Uterus (tissue), 4 donors: ENCODE measurements at regions of chr9 and their contacts with region 1.

Region 1: DNA sequence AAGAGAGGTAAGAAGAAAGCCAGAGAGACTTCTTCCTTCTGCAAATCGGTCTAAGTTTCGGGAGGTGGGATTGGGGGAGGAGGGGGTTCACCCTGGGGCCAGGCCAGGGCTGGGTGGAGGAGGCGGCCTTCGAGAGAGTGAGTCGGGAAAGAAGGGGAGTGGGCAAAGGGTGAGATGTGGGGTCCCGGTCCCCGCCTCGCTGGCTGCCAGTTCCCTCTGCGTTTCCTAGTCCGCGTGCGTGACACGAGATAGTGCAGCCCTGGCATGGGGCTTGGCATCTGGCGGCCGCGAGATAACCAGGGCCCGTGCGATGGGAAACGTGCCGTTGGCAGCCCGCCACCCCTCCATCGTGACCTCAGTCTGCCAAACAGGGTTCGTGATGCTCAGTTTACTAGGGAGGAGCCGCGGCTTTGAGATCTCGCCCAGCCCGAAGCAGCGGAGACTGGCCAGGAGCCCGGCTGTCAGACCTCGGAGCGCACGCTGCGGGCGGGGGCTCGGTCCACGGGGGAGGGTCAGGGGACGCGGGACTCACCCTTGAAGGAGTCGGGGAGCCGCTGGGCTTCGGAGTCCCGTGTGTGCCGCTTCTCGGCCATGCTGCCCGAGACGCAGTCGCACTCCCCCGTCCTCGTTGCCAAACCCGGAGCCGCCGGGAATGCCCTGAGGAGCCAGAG is at the start of gene STOM:
- DNase-seq: peak; percentile 90 to 91
- H3K4me3 ChIP-seq: peak within 1 kb of the TSS; percentile 68 to 74
- H3K27ac ChIP-seq: peak within 1 kb of the TSS; percentile 97 to 98
- H3K4me1 ChIP-seq: peaks cover 3 to 5% of the 10 kb centered on the region in 2 donors
- H3K27me3 ChIP-seq: no peaks in the 10 kb centered on the region
- CTCF ChIP-seq: no peak
- POLR2A ChIP-seq: peak; percentile 98 to 99
- total RNA-seq, gene STOM: 143 to 299 (median 158) TPM

Region 2: GRCh38 chr9:121326130-121326838 is 43.4 kb before region 1 on chr9:
- intact Hi-C with region 1: loop called (anchors 10 kb)
- DNase-seq: peak; percentile 92 to 93
- H3K4me3 ChIP-seq: no peak overlapping the region
- H3K27ac ChIP-seq: peak overlapping the region; percentile 82 to 98
- H3K4me1 ChIP-seq: peaks cover 3 to 15% of the 10 kb centered on the region in 2 donors
- H3K27me3 ChIP-seq: no peaks in the 10 kb centered on the region
- CTCF ChIP-seq: no peak
- POLR2A ChIP-seq: peak in 1 of 2 donors; percentile 48

Region 3: DNA sequence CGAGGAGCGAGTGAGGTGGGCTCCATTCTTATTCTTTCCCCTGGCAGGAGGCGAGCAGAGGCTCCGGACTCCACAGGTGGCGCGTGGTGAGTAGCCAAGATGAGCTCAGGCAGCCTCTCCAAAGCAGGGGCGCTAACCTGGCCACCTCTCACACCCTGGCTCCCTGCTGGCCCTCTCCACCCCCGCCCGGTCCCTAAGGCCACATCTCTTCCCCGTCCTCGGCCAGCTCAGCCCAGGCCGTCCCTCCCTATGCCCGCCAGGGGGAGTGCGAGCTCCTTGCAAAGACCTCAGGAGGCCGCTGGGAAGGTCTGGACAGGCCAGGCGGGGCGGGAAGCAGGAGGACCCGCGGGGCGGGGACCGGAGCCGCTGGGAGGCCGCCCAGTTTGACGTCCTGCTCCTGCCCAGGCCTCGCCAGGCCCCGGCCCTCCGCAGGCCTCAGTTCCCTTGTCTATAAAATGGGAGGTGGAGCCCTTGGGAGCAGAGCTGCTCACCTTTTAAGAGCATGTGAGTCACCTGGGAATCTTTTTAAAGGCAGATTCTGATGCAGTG is 176.2 kb after region 1 on chr9:
- intact Hi-C with region 1: no loop called
- DNase-seq: peak; percentile 95 to 96
- H3K4me3 ChIP-seq: no peak overlapping the region
- H3K27ac ChIP-seq: peak overlapping the region in 1 of 2 donors; percentile 23
- H3K4me1 ChIP-seq: peaks cover 0 to 9% of the 10 kb centered on the region in 2 donors
- H3K27me3 ChIP-seq: no peaks in the 10 kb centered on the region
- CTCF ChIP-seq: peak; percentile 93 to 98 (median 96)
- POLR2A ChIP-seq: no peak